H1 (cell line): ENCODE measurements at regions of chr15 and their contacts with region 1.

Region 1: GRCh38 chr15:76163475-76163881 is 103.7 kb downstream of the TMEM266 start:
- DNase-seq: no peak
- H3K4me3 ChIP-seq: no peak overlapping the region
- H3K27ac ChIP-seq: no peak overlapping the region
- H3K4me1 ChIP-seq: peaks cover 0 to 6% (median 2%) of the 10 kb centered on the region in 4 experiments; a peak in 1 of 7 replicates
- H3K27me3 ChIP-seq: no peaks in the 10 kb centered on the region
- CTCF ChIP-seq: no peak
- EP300 ChIP-seq: no peak
- POLR2A ChIP-seq: no peak
- RAD21 ChIP-seq: no peak

Region 2: DNA sequence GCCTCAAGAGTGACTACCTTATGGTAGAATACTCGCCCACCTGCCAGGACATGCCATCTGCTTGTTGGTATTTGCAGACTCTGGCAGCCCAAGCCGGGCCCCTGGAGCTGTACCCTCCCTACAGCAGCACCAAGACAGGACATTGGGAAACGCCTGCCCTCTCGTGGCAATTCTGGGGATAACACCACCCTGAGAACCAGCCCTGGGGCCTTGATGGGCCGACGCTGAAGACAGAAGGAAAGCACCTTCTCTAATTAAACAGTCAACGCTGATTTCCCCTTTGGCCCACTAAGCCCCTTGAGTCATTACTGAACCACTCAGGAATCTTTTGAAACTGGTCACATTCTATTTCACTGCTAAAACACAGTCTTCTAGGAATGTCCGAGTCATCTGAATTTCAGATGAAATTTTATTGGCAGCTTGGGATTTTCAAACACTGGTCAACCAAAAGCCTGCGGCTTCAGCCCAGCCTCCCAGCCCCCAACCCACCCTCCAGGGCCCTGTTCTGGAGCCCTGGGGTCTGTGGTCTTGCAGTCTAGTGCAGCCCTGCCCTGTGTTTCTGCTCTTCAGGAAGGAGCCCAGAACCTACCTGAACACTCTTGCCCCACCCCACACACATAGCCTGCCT is 12.4 kb before region 1 on chr15:
- CTCF ChIA-PET with region 1: interaction called, 89 read pairs
- POLR2A ChIA-PET with region 1: interaction called, 4 read pairs
- DNase-seq: peak; percentile 85 to 96
- H3K4me3 ChIP-seq: peak overlapping the region in 3 of 4 experiments; percentile 8 to 25 (median 23); a peak in 1 of 8 replicates
- H3K27ac ChIP-seq: no peak overlapping the region
- H3K4me1 ChIP-seq: peaks cover 0 to 26% (median 21%) of the 10 kb centered on the region in 4 experiments; a peak in 6 of 7 replicates
- H3K27me3 ChIP-seq: no peaks in the 10 kb centered on the region
- CTCF ChIP-seq: peak; percentile 90 to 91 (median 91)
- EP300 ChIP-seq: no peak
- POLR2A ChIP-seq: no peak
- RAD21 ChIP-seq: peak; percentile 72 to 82

Region 3: DNA sequence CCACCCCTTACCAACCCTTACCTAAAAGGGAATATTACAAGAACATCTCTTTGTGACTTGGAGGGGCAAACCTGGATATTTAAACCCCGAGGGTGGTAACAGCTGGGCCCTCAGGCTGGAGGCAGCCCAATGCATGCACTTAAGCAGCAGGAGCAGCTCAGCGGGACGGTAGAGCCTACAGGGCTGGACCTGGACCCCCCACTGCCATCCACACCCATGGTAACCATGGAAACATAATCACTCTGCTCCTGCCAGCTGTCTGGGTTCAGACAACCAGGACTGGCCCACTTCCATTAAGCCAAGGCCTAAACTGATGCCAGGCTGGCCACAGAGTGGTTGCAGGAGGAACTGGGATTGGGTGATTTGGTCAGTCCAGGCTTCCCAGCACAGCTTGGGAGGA is 95.0 kb after region 1 on chr15:
- CTCF ChIA-PET with region 1: no interaction called
- POLR2A ChIA-PET with region 1: no interaction called
- DNase-seq: no peak
- H3K4me3 ChIP-seq: no peak overlapping the region
- H3K27ac ChIP-seq: no peak overlapping the region
- H3K4me1 ChIP-seq: peaks cover 0 to 7% (median 3%) of the 10 kb centered on the region in 4 experiments; a peak in 3 of 7 replicates
- H3K27me3 ChIP-seq: no peaks in the 10 kb centered on the region
- CTCF ChIP-seq: no peak
- EP300 ChIP-seq: no peak
- POLR2A ChIP-seq: no peak
- RAD21 ChIP-seq: no peak